Mucosa of descending colon (tissue), 3 donors: ENCODE measurements at regions of chr17 and their contacts with region 1.

Region 1: DNA sequence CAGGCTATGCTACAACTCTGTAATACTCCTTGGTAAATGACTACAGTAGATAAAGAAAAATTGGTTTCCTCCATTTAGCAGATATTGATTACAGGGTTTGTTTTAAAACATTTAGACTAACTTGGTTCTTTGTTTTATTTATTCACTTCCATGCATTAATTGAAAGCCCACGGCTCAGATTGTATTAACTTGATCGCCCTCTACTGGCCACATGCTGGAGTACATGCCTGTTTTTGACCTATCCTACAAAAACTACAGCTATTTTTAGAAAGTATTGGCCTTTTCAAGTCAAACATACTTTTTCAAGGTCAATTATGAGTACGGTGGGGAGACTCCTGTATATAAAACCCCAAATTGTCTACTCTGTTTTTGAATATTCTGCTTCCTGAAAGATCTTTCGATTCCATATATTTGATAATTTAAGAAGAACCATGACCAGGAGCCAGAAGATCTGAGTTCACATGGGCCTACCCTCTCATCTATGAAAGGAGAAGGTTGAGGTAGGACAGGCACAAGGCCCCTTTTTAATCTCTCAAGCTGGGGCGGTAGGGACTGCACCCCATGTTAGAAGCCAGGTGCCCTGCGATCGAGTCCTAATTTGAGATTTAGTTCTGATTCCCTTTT is 51.8 kb downstream of the CA10 start:
- DNase-seq: peak in 2 of 3 donors; percentile 26 to 78
- ATAC-seq: peak; percentile 56
- H3K4me3 ChIP-seq: no peak overlapping the region
- H3K4me1 ChIP-seq: no peaks in the 10 kb centered on the region
- CTCF ChIP-seq: peak; percentile 61

Region 2: DNA sequence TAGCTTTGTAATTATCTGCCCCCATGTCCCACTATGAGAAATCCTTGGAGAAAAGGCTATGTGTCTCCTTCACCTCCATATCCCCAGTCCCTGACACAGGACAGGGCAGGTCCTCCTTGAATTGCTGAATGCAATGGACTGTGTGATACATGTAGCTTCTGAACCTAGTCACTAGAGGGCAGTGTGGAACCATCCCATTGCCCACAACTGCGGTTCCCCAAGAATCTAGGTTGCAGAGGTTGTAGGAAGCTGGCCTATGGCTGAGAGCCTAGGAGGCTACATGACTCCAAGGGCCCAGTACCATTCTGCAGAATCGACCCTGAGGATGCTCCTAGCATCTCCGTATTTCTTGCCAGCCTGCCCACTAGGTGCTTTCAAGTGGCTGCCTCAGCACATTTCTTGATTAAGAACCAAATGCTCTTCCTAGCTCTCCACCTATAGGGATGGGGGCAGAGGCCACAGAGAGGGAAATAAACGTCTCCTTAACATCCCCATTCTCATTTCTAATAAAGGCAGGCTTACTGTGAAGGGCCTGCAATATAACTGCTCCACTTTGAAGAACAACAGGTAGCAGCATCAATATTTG is 342.3 kb before region 1 on chr17:
- intact Hi-C with region 1: loop called in 1 of 2 experiments (anchors 5 kb)
- DNase-seq: peak in 2 of 3 donors; percentile 30 to 50
- ATAC-seq: peak; percentile 96
- H3K4me3 ChIP-seq: no peak overlapping the region
- H3K4me1 ChIP-seq: no peaks in the 10 kb centered on the region
- CTCF ChIP-seq: peak; percentile 64

Region 3: DNA sequence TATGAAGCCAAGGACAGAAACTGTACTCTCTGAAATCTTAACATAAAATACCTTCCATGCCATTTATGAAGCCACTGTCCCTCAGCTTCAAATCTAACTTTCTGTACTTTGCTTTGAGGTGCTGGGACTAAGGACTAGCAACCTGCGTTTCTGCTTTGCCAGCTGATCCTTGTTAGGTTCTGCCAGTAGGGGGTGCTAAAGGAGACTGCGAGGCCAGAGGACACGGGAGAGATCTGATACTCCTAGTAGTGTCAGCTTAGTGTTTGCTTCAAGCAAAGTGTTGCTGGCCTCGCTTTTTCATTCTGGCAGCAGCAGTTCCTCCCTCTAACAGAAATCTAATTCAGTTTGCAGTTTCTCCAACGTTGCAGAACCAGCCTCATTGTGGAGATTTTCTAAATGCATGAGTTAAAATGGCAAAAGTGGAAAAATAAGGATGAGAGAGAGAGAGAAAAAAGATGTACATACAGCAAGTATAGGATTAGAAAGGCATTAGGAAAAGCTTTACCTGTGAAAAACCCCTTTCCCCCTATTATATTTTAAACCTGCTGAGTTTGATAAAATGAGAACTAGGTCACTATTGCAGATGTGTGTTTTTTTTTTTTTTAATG is 245.7 kb before region 1 on chr17:
- intact Hi-C with region 1: loop called in 1 of 2 experiments (anchors 5 kb)
- DNase-seq: peak in 2 of 3 donors; percentile 33 to 81
- ATAC-seq: peak; percentile 80
- H3K4me3 ChIP-seq: no peak overlapping the region
- H3K4me1 ChIP-seq: peaks cover 3% of the 10 kb centered on the region
- CTCF ChIP-seq: peak; percentile 34

Region 4: DNA sequence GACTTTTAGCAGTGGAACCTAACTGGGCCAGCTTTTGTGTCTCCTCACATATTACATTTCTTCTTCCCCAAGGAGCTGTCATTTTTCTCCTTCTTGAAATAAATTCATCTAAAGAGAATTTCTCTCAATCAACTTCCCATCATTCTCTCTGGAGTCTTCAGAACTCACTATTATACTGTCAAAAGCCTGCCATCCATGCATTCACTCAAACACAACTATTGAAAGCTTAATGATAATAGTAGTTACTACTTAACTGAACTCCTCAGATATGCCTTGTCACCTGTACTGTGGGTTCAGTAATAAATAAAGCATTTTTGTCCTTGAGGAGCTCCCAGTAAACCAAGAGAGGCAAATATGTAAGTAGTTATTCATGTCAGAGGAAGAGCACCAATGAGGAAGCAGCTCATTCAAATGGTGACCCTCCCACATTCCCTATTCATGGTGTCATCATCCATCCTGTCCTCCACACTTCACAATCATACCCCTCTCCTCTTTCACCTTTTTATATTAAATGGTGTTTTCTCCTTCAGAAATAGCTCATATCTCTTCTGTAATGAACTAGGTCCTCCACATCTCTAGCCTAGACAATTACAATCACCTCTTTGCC is 110.8 kb before region 1 on chr17:
- intact Hi-C with region 1: no loop called
- DNase-seq: no peak
- ATAC-seq: no peak
- H3K4me3 ChIP-seq: no peak overlapping the region
- H3K4me1 ChIP-seq: no peaks in the 10 kb centered on the region
- CTCF ChIP-seq: no peak